ENCODE measurements at regions of chr7 and their contacts with region 1.

Region 1: GRCh38 chr7:142535123-142535779 is 214.0 kb upstream of the PRSS1 start:
- DNase-seq: peak; percentile 83
- H3K4me3 Mint-ChIP-seq: peak overlapping the region; percentile 17
- H3K27ac Mint-ChIP-seq: peak overlapping the region; percentile 63
- H3K4me1 Mint-ChIP-seq: peaks cover 31% of the 10 kb centered on the region
- H3K27me3 Mint-ChIP-seq: peaks cover 5% of the 10 kb centered on the region

Region 2: GRCh38 chr7:142516038-142516501 is 19.2 kb before region 1 on chr7:
- CTCF ChIA-PET with region 1: interaction called, 20 read pairs
- POLR2A ChIA-PET with region 1: no interaction called
- DNase-seq: peak; percentile 42
- H3K4me3 Mint-ChIP-seq: no peak overlapping the region
- H3K27ac Mint-ChIP-seq: no peak overlapping the region
- H3K4me1 Mint-ChIP-seq: peaks cover 31% of the 10 kb centered on the region
- H3K27me3 Mint-ChIP-seq: peaks cover 6% of the 10 kb centered on the region

Region 3: DNA sequence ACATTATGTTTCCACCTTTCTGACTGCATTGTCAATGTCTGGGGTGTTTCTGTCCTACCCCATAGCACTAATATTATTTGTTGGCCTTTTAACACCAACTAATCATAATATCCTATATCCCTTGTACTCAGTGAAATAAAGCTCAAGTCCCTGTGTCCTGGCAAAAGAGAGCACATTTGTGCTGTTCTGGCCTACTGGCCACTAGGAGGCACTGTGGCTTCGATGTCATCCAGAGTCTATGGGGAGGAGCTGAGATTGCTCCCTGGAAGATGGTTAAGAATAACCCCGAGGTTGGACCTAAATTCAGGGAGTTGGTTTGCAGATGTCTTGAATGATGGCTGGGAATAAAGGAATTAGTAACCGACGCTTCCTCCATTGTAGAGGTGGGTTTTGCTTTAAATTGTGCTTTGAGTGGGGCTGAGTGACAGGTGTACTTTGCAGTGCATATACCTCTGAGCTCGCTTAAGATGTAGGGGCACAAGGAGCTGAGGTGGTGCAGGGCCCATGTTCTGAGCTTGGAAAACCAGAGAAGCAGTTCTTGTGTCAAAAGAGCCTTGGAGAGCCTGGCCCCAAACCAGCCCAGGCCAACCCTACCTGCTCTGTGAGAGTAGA is 22.8 kb after region 1 on chr7:
- CTCF ChIA-PET with region 1: interaction called, 34 read pairs
- POLR2A ChIA-PET with region 1: interaction called, 5 read pairs
- DNase-seq: peak; percentile 58
- H3K4me3 Mint-ChIP-seq: peak overlapping the region; percentile 31
- H3K27ac Mint-ChIP-seq: no peak overlapping the region
- H3K4me1 Mint-ChIP-seq: peaks cover 35% of the 10 kb centered on the region
- H3K27me3 Mint-ChIP-seq: peaks cover 6% of the 10 kb centered on the region

Region 4: DNA sequence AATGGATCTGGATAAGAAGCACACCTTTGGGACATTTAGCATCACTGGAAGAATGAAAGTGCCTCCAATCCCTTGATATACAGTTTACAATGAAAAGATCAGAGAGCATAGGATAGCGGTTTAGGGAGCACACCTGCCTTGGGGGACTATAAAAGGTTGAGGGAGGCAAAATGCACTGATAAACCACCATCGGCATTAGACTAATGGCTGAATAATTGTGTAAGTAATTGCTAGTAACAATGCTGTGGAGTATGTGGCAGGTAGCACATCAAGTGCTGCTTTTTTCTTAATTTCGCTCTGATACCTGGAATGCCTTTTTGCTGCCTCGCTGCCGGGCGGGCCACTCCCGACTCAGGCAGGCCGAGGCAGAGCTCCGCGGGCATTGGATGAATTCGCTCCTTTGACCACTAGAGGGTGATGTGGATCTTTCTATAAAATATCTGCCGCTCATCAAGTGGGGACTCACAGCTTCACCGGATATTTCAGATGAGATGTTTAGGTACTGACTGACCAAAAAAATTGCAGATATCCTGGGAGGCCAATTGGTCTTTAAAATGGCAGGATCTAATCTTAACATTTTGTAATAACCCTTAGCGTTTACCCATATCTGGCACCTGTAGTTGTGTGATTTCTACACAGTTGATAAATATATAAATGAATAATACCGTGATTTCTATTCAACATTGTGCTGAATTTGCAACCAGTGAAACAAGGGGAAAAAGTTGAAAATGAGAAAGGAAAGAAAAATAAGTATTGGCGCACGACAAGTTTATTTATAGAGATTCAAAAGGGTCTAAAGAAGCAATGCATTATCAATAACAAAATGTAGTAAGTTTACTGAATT is 97.3 kb after region 1 on chr7:
- CTCF ChIA-PET with region 1: interaction called, 11 read pairs
- POLR2A ChIA-PET with region 1: no interaction called
- DNase-seq: peak; percentile 60
- H3K4me3 Mint-ChIP-seq: no peak overlapping the region
- H3K27ac Mint-ChIP-seq: peak overlapping the region; percentile 29
- H3K4me1 Mint-ChIP-seq: peaks cover 13% of the 10 kb centered on the region
- H3K27me3 Mint-ChIP-seq: peaks cover 15% of the 10 kb centered on the region

Region 5: GRCh38 chr7:143008007-143008901 is 473.0 kb after region 1 on chr7:
- CTCF ChIA-PET with region 1: interaction called, 23 read pairs
- POLR2A ChIA-PET with region 1: no interaction called
- DNase-seq: peak; percentile 81
- H3K4me3 Mint-ChIP-seq: no peak overlapping the region
- H3K27ac Mint-ChIP-seq: no peak overlapping the region
- H3K4me1 Mint-ChIP-seq: peaks cover 4% of the 10 kb centered on the region
- H3K27me3 Mint-ChIP-seq: peaks cover 19% of the 10 kb centered on the region

Region 6: GRCh38 chr7:143229054-143229790 is 694.0 kb after region 1 on chr7:
- CTCF ChIA-PET with region 1: no interaction called
- POLR2A ChIA-PET with region 1: no interaction called
- DNase-seq: no peak
- H3K4me3 Mint-ChIP-seq: no peak overlapping the region
- H3K27ac Mint-ChIP-seq: no peak overlapping the region
- H3K4me1 Mint-ChIP-seq: no peaks in the 10 kb centered on the region
- H3K27me3 Mint-ChIP-seq: peaks cover 28% of the 10 kb centered on the region

Measured in activated CD4-positive, alpha-beta memory T cell treated with anti-CD3 and anti-CD28 coated beads, Interleukin-2, amount 10 ng/mL, durations not matched to agents 7 days and 5 days (primary cell).